Activated CD8-positive, alpha-beta T cell treated with anti-CD3 and anti-CD28 coated beads, Interleukin-2, amount 10 ng/mL, durations not matched to agents 7 days and 5 days (primary cell): ENCODE measurements at regions of chr20 and their contacts with region 1.

Region 1: GRCh38 chr20:2663887-2664719 is at the start of gene IDH3B:
- DNase-seq: peak; percentile 95
- ATAC-seq: peak; percentile 97
- H3K4me3 Mint-ChIP-seq: peak within 1 kb of the TSS; percentile 90
- H3K27ac Mint-ChIP-seq: peak within 1 kb of the TSS; percentile 99
- H3K4me1 Mint-ChIP-seq: peaks cover 29% of the 10 kb centered on the region
- H3K27me3 Mint-ChIP-seq: peaks cover 7% of the 10 kb centered on the region
- total RNA-seq, gene IDH3B: 99.6 to 100 TPM

Region 2: GRCh38 chr20:2651772-2652723 is 12.1 kb before region 1 on chr20 and contains the start of gene NOP56:
- CTCF ChIA-PET with region 1: interaction called, 15 read pairs
- POLR2A ChIA-PET with region 1: interaction called, 93 read pairs
- DNase-seq: peak; percentile 94
- ATAC-seq: peak; percentile 89
- H3K4me3 Mint-ChIP-seq: peak within 1 kb of the TSS; percentile 88
- H3K27ac Mint-ChIP-seq: peak within 1 kb of the TSS; percentile 89
- H3K4me1 Mint-ChIP-seq: peaks cover 50% of the 10 kb centered on the region
- H3K27me3 Mint-ChIP-seq: no peaks in the 10 kb centered on the region
- total RNA-seq, gene NOP56: 441 to 450 TPM

Region 3: DNA sequence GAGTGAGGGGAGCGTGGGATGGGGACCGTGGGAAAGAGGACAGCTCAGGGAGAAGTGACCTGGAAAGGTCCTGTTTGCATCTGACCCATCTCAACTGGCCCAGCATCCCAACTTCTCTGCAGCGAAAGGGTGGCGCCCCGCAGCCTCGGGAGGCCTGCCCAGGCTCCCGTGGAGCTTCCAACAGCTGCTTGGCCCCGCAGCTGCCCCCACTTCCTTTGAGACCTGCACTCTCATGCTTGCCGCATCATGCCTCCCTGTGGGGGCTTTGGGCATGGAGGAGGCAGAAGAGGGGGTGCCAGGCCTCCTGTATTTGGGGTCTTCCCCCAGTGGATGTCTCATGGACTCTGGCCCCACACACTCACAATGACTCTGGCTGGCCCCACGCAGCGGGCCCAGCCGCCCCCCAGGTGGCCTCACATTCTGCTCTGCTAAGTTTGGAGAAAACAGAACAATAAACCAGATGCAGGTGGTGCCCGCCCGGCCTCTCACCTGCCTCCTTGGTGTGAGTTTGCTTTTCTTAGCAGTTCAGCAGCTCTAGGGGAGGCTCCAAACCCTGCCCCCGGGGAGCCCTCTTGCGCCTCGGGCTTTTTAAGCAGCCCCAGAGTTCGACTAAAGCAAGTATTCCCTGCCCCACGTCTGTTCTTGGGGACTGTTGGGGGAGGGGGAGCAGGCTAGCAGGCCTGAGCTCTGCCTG is 95.6 kb after region 1 on chr20:
- CTCF ChIA-PET with region 1: no interaction called
- POLR2A ChIA-PET with region 1: no interaction called
- DNase-seq: no peak
- ATAC-seq: no peak
- H3K4me3 Mint-ChIP-seq: no peak overlapping the region
- H3K27ac Mint-ChIP-seq: no peak overlapping the region
- H3K4me1 Mint-ChIP-seq: peaks cover 2% of the 10 kb centered on the region
- H3K27me3 Mint-ChIP-seq: peaks cover 31% of the 10 kb centered on the region